Heart left ventricle (tissue), 16 donors: ENCODE measurements at regions of chr16 and their contacts with region 1.

Region 1: GRCh38 chr16:2874912-2875362 is 8.1 kb upstream of the FLYWCH2 start:
- DNase-seq: peak; percentile 80 to 89 (median 85)
- ATAC-seq: peak; percentile 94 to 99 (median 98)
- H3K4me3 ChIP-seq: no peak overlapping the region
- H3K27ac ChIP-seq: peak overlapping the region in 1 of 12 donors; percentile 32
- H3K4me1 ChIP-seq: peaks cover 0 to 8% (median 1%) of the 10 kb centered on the region in 12 donors
- H3K27me3 ChIP-seq: no peaks in the 10 kb centered on the region
- CTCF ChIP-seq: peak; percentile 87 to 98 (median 93)
- POLR2A ChIP-seq: no peak

Region 2: GRCh38 chr16:2905431-2906387 is 30.8 kb after region 1 on chr16:
- intact Hi-C with region 1: loop called in 5 of 10 experiments (anchors 2 to 5 kb)
- DNase-seq: peak; percentile 99 to 100 (median 99)
- ATAC-seq: peak; percentile 88 to 93 (median 91)
- H3K4me3 ChIP-seq: peak overlapping the region; percentile 64 to 96 (median 81)
- H3K27ac ChIP-seq: peak overlapping the region in 10 of 12 donors; percentile 91 to 100 (median 98)
- H3K4me1 ChIP-seq: peaks cover 0 to 23% (median 12%) of the 10 kb centered on the region in 12 donors
- H3K27me3 ChIP-seq: no peaks in the 10 kb centered on the region
- CTCF ChIP-seq: no peak
- POLR2A ChIP-seq: no peak

Region 3: GRCh38 chr16:2911580-2912329 is 36.8 kb after region 1 on chr16 and contains the start of gene FLYWCH1:
- intact Hi-C with region 1: loop called in 4 of 10 experiments (anchors 2 to 5 kb)
- DNase-seq: peak; percentile 98 to 99 (median 99)
- ATAC-seq: peak; percentile 94 to 99 (median 98)
- H3K4me3 ChIP-seq: peak within 1 kb of the TSS; percentile 64 to 97 (median 92)
- H3K27ac ChIP-seq: peak within 1 kb of the TSS; percentile 72 to 95 (median 90)
- H3K4me1 ChIP-seq: peaks cover 0 to 34% (median 14%) of the 10 kb centered on the region in 12 donors
- H3K27me3 ChIP-seq: no peaks in the 10 kb centered on the region
- CTCF ChIP-seq: no peak
- POLR2A ChIP-seq: peak in 1 of 2 donors; percentile 90
- total RNA-seq, gene FLYWCH1: 26.3 to 48.4 (median 34.2) TPM

Region 4: GRCh38 chr16:2919511-2920255 is 44.7 kb after region 1 on chr16:
- intact Hi-C with region 1: loop called in 6 of 10 experiments (anchors 2 to 5 kb)
- DNase-seq: peak in 3 of 5 donors; percentile 39 to 53 (median 43)
- ATAC-seq: peak; percentile 47 to 72 (median 59)
- H3K4me3 ChIP-seq: no peak overlapping the region
- H3K27ac ChIP-seq: peak overlapping the region in 9 of 12 donors; percentile 10 to 60 (median 44)
- H3K4me1 ChIP-seq: peaks cover 0 to 21% (median 7%) of the 10 kb centered on the region in 12 donors
- H3K27me3 ChIP-seq: no peaks in the 10 kb centered on the region
- CTCF ChIP-seq: peak; percentile 81 to 95 (median 88)
- POLR2A ChIP-seq: no peak

Region 5: DNA sequence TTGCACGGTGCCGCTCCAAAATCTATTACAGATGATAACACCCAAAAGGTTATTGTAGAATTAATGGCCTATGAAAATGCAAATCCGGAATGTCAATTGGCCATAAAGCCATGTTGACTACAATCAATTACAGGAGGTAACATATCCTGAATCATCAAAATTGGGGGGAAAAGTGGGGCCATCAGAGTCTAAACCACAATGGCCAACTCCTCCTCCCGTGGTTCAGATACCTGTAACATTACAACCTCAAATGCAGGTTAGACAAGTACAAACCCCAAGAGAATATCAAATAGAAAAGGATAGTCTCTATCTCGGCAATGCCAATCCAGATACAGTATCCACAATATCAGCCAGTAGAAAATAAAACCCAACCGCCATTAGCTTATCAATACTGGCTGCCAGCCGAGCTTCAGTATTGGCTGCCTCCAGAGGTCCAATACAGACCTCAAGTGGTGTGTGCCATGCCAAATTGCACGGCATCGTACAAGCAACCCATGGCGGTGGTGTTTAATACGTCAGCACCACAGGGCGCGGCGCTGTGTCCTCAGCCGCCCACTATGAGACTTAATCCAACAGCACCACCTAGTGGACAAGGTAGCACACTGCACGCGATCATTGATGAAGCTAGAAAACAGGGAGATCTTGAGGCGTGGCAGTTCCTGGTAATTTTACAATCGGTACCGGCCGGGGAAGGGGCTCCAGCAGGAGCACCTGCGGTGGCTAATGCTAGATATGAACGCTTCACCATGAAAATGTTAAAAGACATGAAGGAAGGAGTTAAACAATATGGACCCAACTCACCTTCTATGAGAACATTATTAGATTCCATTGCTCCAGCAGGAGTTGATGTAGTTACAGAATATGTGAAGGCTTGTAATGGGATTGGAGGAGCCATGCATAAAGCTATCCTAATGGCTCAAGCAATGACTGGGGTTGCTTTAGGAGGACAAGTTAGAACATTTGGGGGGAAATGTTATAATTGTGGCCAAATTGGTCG is 52.0 kb after region 1 on chr16:
- intact Hi-C with region 1: loop called in 2 of 10 experiments (anchors 2 kb)
- DNase-seq: peak; percentile 77 to 91 (median 86)
- ATAC-seq: peak; percentile 81 to 93 (median 91)
- H3K4me3 ChIP-seq: peak overlapping the region in 8 of 12 donors; percentile 7 to 51 (median 24)
- H3K27ac ChIP-seq: no peak overlapping the region
- H3K4me1 ChIP-seq: peaks cover 0 to 12% (median 3%) of the 10 kb centered on the region in 12 donors
- H3K27me3 ChIP-seq: no peaks in the 10 kb centered on the region
- CTCF ChIP-seq: peak; percentile 86 to 99 (median 96)
- POLR2A ChIP-seq: no peak

Region 6: GRCh38 chr16:2937170-2937569 is 62.2 kb after region 1 on chr16:
- intact Hi-C with region 1: no loop called
- DNase-seq: no peak
- ATAC-seq: no peak
- H3K4me3 ChIP-seq: no peak overlapping the region
- H3K27ac ChIP-seq: no peak overlapping the region
- H3K4me1 ChIP-seq: no peaks in the 10 kb centered on the region
- H3K27me3 ChIP-seq: no peaks in the 10 kb centered on the region
- CTCF ChIP-seq: no peak
- POLR2A ChIP-seq: no peak

Region 7: DNA sequence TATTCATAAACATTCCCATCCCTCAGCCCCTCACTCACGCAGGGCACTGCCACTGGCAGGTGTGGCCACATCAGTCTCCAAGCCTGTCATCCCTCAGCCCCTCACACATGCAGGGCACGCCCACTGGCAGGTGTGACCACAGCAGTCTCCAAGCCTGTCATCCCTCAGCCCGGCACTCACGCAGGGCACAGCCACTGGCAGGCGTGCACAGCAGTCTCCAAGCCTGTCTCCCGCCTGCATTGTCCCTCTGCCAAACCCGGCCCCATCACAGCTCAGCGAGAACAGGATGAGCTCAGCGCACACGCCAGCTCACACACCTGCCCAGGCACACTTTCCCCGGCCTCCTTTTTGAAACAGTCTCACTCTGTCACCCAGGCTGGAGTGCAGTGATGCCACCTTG is 77.7 kb after region 1 on chr16:
- intact Hi-C with region 1: no loop called
- DNase-seq: peak in 2 of 5 donors; percentile 25 to 47
- ATAC-seq: peak in 3 of 4 donors; percentile 35 to 57 (median 43)
- H3K4me3 ChIP-seq: no peak overlapping the region
- H3K27ac ChIP-seq: no peak overlapping the region
- H3K4me1 ChIP-seq: no peaks in the 10 kb centered on the region
- H3K27me3 ChIP-seq: peaks cover 0 to 39% (median 21%) of the 10 kb centered on the region in 9 donors
- CTCF ChIP-seq: no peak
- POLR2A ChIP-seq: no peak

Region 8: DNA sequence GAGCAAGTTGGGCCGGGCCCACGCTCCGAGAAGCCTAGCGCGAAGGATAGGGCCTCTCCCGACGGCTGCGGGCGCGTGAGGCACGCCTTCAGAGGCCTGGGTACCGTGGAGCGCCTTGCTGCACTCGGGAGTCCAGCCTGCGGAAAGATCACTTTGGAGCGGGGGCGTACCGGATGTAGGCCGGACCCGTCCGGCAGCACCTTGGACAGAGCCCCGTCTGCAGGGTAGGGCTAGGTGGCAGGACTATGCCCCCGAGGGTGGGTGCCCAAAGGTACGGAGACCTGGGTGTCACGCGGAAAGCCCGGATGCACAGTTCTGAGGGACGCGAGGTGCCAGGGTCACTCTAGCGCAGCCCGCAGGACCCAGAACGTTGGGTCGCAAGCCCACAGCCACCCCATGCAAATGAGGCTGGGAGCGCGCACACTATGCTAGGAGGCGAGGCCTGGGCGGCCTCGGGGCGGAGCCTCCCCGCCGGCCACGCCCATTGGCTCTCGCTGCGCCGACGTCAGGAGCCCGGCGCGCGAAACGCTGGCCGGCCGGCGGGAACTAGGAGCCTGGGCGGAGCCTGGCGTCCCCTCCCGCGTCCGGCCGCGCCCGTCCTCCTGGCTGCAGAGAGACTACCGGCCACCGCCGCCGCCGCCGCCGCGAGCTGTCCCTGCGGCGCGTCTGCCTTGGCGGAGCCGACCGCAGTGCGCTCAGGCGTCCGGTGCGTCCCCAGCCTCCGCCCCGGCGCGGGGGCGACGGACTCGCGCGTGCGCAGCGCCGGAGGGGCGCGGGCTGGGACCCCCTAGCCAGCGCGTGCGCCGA is 94.0 kb after region 1 on chr16 and contains the start of gene PAQR4:
- intact Hi-C with region 1: loop called in 1 of 10 experiments (anchors 10 kb)
- DNase-seq: peak; percentile 88 to 95 (median 90)
- ATAC-seq: peak; percentile 90 to 95 (median 92)
- H3K4me3 ChIP-seq: peak within 1 kb of the TSS; percentile 62 to 95 (median 78)
- H3K27ac ChIP-seq: peak within 1 kb of the TSS in 11 of 12 donors; percentile 24 to 79 (median 55)
- H3K4me1 ChIP-seq: peaks cover 3 to 64% (median 40%) of the 10 kb centered on the region in 12 donors
- H3K27me3 ChIP-seq: peaks cover 41 to 46% (median 42%) of the 10 kb centered on the region in 9 donors
- CTCF ChIP-seq: no peak
- POLR2A ChIP-seq: peak in 1 of 2 donors; percentile 77
- total RNA-seq, gene PAQR4: 6.9 to 16.3 (median 9.0) TPM